Lower leg skin (tissue), 4 donors: ENCODE measurements at regions of chr9 and their contacts with region 1.

Region 1: DNA sequence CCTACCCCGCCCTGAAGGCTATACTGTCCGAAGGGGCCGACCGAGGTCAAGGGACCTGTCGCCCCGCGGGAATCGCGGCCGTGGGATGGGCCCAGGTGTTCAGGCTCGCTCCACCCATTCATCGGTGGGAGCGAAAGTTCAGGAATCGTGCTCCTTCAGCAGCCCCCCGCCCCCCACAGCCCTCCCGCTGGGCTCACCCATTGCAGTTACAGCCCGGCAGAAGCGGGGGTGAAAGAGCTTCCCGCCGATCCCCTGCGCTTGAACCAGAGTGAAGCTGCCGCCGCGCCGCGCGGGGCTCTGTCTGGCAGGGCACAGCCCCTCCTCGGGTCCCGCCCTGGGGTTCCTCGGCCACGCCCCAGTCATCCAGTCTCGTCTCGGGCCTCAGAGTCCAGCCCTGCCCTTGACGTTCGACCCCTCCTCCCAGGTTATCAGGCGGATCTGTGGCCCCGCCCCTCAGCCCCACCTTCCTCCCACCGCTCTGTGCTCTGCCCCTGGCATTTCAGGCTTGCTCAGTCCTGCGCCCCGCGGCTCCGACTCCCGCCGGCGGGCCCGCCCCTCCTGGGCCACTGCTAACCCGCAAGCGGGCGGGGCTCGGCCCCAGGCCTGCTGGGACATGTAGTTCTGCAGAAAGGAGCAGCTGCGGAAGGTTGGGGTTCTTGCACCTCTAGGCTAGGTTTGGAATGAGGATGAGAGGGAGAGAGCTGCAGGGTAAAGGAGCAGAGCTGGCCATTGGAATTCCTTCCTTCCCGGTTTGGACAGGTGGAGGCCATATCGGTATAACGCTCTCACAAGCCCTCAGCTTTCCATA is at the start of gene MYORG:
- DNase-seq: peak; percentile 91 to 98
- H3K4me3 ChIP-seq: peak within 1 kb of the TSS; percentile 51
- CTCF ChIP-seq: no peak
- POLR2A ChIP-seq: no peak
- total RNA-seq, gene MYORG: 4.3 to 13.6 (median 6.1) TPM

Region 2: DNA sequence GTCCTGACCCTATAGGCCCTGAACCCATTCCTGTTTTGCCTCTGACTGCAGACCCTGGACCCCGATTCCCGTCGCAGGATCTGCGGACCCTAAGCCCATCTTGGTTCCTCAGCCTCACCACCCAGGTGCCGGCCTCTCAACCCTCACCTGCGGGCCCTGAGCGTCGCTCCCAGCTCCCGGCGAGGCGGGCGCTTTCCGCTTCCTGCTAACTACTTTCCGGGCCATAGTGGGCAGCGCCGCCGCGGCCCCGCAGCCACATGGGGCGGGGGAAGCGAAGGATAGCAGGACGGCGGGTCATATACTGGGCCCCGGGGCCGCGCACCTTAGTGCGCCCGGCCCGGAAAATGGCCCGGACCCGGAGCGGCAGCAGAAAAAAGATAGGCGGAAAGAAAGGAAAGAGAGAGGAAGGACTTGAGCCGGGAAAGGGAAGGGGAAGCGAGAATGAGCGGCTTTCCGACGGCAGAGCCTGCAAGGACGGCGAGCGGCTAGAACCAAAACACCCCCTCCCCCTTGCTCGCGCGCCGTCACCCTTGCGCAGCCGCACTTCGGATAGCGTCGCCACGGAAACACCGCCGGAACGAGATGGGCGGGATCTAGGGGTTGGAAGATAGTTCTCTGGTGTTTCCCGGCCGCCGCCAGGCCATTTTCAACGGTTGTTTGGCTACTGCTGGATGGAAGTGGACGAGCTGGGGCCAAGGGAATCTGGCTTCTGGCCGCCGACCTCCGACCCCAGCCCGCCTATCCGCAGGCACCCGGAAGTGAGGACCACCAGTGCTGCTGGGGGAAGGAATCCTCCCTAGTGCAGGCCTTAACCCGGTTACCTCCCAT is 250.4 kb before region 1 on chr9 and contains the start of gene DCAF12:
- intact Hi-C with region 1: loop called (anchors 10 kb)
- DNase-seq: peak; percentile 89 to 98
- H3K4me3 ChIP-seq: peak within 1 kb of the TSS; percentile 61
- CTCF ChIP-seq: no peak
- POLR2A ChIP-seq: no peak
- total RNA-seq, gene DCAF12: 21.9 to 30.7 (median 26.8) TPM

Region 3: DNA sequence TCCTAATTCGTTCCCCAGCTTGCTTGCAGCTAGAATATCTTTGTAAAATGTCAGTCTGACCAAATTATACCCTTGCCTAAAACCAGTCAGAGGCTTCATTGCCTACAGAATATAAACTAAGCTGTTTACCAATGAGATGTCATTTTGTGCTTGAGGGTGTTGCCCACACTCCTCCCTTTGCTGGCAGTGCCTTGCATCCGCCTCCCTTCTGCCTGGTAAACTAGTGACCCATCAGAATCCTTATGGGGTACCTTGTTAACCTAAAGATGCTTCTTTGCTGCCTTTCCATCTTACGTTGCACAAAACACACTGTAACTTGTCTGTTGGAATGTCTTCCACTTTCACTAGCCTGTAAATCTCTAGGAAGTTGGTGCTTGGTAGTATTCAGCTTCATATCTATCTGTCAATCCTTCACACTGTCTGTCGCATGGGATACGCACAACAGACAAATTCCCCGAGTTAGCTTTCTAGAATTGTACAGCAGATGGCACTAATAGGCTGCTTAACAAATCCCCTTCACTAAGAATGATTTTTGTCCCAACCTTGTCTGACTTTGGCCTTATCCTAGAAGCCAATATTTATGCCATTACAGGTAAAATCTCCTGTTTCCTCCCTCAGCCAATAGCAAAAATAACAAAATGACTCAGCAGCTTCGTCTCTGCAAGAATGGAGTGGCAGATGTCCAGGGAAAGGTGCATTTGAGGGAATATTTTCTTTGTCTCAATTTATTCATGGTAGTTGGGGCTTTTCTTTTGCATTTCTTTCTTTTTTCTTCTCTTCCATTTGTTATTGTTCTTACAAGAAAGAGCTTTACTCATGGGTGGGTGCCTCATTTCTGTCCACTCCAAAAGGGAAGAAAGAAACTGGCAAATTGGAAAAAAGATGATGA is 44.5 kb before region 1 on chr9:
- intact Hi-C with region 1: loop called (anchors 2 kb)
- DNase-seq: no peak
- H3K4me3 ChIP-seq: no peak overlapping the region
- CTCF ChIP-seq: no peak
- POLR2A ChIP-seq: no peak

Region 4: GRCh38 chr9:34437006-34437925 is 60.5 kb after region 1 on chr9:
- intact Hi-C with region 1: no loop called
- DNase-seq: peak in 1 of 2 donors; percentile 31
- H3K4me3 ChIP-seq: no peak overlapping the region
- CTCF ChIP-seq: peak in 1 of 3 donors; percentile 34
- POLR2A ChIP-seq: no peak